Mammary epithelial cell (primary cell): ENCODE measurements at regions of chr13 and their contacts with region 1.

Region 1: GRCh38 chr13:100440751-100441425 is 147.7 kb downstream of the GGACT start:
- DNase-seq: no peak
- H3K4me3 ChIP-seq: no peak overlapping the region
- H3K27ac ChIP-seq: no peak overlapping the region
- H3K4me1 ChIP-seq: no peaks in the 10 kb centered on the region
- H3K27me3 ChIP-seq: no peaks in the 10 kb centered on the region
- CTCF ChIP-seq: no peak

Region 2: GRCh38 chr13:99812625-99813024 is 628.3 kb before region 1 on chr13:
- CTCF ChIA-PET with region 1: no interaction called
- dilution Hi-C with region 1: no loop called
- in situ Hi-C with region 1: no loop called
- intact Hi-C with region 1: no loop called
- DNase-seq: no peak
- H3K4me3 ChIP-seq: no peak overlapping the region
- H3K27ac ChIP-seq: no peak overlapping the region
- H3K4me1 ChIP-seq: no peaks in the 10 kb centered on the region
- H3K27me3 ChIP-seq: peaks cover 1% of the 10 kb centered on the region
- CTCF ChIP-seq: no peak

Region 3: GRCh38 chr13:100382785-100383184 is 58.1 kb before region 1 on chr13:
- CTCF ChIA-PET with region 1: no interaction called
- dilution Hi-C with region 1: no loop called
- in situ Hi-C with region 1: loop called in 1 of 2 experiments (anchors 10 kb)
- intact Hi-C with region 1: no loop called
- DNase-seq: no peak
- H3K4me3 ChIP-seq: no peak overlapping the region
- H3K27ac ChIP-seq: no peak overlapping the region
- H3K4me1 ChIP-seq: peaks cover 4% of the 10 kb centered on the region
- H3K27me3 ChIP-seq: no peaks in the 10 kb centered on the region
- CTCF ChIP-seq: no peak